ENCODE measurements at regions of chr1 and their contacts with region 1.

Region 1: DNA sequence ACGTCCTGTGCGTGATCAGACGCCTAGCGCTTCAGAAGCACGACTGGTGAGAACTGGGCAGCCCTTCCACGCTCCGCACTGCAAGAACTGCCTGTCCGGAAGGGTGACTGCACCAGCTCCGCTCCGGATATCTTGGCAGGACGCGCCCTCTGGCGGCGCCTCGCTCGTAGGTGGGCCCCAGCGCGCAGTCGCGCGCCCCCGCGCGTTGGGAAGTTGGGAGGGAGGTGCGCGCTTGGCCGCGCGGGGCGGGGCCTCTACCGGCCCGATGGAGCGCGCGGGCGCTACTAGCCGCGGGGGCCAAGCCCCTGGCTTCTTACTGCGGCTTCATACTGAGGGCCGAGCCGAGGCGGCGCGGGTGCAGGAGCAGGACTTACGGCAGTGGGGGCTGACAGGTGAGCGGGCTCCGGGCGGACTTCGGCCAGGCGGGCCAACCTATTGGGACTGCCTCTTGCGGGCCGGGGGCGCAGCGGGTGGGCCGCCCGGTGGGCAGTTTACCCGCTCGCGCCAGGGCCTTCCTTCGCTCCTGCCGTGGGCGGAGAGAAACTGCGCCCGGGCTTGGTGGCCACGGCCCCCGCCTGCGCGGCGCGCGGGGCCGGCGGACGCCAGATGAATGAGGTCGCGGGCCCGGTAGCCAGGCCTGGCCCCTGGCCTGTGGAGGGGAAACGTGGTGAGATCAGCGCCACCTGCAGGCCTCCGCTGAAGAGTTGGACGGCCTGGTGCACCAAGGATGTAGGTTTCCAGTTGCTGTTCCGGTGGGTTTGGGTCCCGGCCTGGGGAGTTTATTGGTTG is at the start of gene CHD1L:
- DNase-seq: peak; percentile 93
- H3K4me3 Mint-ChIP-seq: peak within 1 kb of the TSS; percentile 95
- H3K27ac Mint-ChIP-seq: peak within 1 kb of the TSS; percentile 85
- H3K4me1 Mint-ChIP-seq: peaks cover 44% of the 10 kb centered on the region
- H3K27me3 Mint-ChIP-seq: peaks cover 5% of the 10 kb centered on the region
- total RNA-seq, gene CHD1L: 50.0 to 55.9 TPM

Region 2: GRCh38 chr1:147172168-147172992 is 70.3 kb before region 1 on chr1 and contains the start of gene PRKAB2:
- CTCF ChIA-PET with region 1: interaction called, 28 read pairs
- POLR2A ChIA-PET with region 1: no interaction called
- DNase-seq: peak; percentile 86
- H3K4me3 Mint-ChIP-seq: peak within 1 kb of the TSS; percentile 93
- H3K27ac Mint-ChIP-seq: peak within 1 kb of the TSS; percentile 98
- H3K4me1 Mint-ChIP-seq: peaks cover 39% of the 10 kb centered on the region
- H3K27me3 Mint-ChIP-seq: peaks cover 1% of the 10 kb centered on the region
- total RNA-seq, gene PRKAB2: 9.7 to 10.3 TPM

Region 3: GRCh38 chr1:147210987-147211386 is 31.6 kb before region 1 on chr1:
- CTCF ChIA-PET with region 1: no interaction called
- POLR2A ChIA-PET with region 1: no interaction called
- DNase-seq: no peak
- H3K4me3 Mint-ChIP-seq: no peak overlapping the region
- H3K27ac Mint-ChIP-seq: no peak overlapping the region
- H3K4me1 Mint-ChIP-seq: no peaks in the 10 kb centered on the region
- H3K27me3 Mint-ChIP-seq: peaks cover 3% of the 10 kb centered on the region

Region 4: DNA sequence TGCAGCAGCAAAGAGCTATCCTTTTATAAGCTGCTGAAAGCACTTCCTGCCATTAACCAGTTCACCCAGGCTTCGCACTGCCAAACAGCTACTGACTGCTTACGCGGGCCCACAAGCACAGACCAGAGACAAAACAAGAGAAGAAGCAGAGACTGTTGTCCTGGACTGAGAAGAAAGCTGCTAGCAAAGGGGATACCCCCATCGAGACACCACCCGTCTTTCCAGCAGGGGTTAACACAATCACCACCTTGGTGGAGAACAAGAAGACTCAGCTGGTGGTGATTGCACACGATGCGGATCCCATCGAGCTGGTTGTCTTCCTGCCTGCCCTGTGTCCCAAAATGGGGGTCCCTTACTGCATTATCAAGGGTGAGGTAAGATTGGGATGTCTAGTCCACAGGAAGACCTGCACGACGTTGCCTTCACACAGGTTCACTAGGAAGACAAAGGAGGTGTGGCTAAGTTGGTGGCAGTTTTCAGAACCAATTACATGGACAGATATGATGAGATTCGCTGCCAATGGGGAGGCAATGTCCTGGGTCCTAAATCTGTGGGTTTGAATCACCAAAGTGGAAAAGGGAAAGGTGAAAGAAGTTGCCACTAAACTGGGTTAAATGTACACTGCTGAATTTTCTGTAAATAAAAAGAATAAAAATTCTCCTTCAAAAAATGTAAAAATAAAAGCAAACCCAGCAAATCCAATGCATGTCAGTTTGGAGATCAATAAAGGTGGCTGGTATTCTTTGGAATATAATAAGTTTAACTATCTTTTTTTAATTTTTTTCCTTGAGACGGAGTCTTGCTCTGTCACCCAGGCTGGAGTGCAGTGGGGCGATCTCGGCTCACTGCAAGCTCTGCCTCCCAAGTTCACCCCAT is 18.7 kb before region 1 on chr1:
- CTCF ChIA-PET with region 1: interaction called, 14 read pairs
- POLR2A ChIA-PET with region 1: no interaction called
- DNase-seq: no peak
- H3K4me3 Mint-ChIP-seq: no peak overlapping the region
- H3K27ac Mint-ChIP-seq: no peak overlapping the region
- H3K4me1 Mint-ChIP-seq: peaks cover 12% of the 10 kb centered on the region
- H3K27me3 Mint-ChIP-seq: peaks cover 5% of the 10 kb centered on the region

Region 5: GRCh38 chr1:147515046-147515869 is 272.6 kb after region 1 on chr1:
- CTCF ChIA-PET with region 1: no interaction called
- POLR2A ChIA-PET with region 1: no interaction called
- DNase-seq: no peak
- H3K4me3 Mint-ChIP-seq: no peak overlapping the region
- H3K27ac Mint-ChIP-seq: peak overlapping the region; percentile 9
- H3K4me1 Mint-ChIP-seq: peaks cover 6% of the 10 kb centered on the region
- H3K27me3 Mint-ChIP-seq: peaks cover 9% of the 10 kb centered on the region

Region 6: GRCh38 chr1:147549526-147549925 is 306.9 kb after region 1 on chr1:
- CTCF ChIA-PET with region 1: no interaction called
- POLR2A ChIA-PET with region 1: no interaction called
- DNase-seq: peak; percentile 13
- H3K4me3 Mint-ChIP-seq: no peak overlapping the region
- H3K27ac Mint-ChIP-seq: peak overlapping the region; percentile 37
- H3K4me1 Mint-ChIP-seq: peaks cover 39% of the 10 kb centered on the region
- H3K27me3 Mint-ChIP-seq: peaks cover 2% of the 10 kb centered on the region